CD4-positive, alpha-beta memory T cell (primary cell): ENCODE measurements at regions of chr10 and their contacts with region 1.

Region 1: DNA sequence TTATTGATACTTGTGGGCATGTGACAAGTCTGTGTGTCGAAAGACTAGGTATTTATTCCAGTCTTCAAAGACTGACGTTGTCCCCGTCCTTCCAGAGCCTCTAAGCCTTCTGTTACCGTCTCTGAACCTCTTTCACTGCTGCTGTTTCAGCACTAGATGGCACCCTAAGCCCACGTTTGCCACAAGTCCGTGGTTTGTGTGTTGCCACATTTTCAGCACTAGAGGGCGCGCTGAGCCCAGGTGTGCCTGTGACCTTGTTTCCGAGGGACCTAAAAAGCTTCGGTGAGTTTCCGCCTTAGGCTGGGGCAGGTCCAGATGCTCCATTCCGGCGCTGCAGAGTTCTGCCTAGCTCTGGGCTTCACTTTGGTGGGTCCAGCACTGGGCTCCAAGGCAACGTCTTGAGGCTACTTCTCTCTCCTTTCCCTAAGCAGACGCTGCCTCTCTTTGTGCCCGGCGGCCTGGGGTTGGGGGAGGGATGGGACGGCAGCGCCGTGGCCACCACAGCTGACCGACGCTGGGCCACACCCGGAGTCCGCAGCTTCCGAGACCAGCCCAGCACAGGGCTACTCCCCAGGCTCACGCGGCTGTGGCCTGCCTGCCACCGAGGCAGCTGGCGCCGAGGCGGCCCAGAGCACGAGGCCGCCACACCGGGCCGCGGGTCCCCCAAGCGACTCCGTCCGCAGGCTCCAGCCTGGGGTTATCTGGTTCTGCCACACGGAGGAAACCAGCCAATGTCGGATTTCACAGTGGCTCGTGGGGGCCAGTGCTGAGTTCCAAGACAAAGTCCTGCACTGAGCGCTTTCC is 520.2 kb downstream of the REEP3 start:
- DNase-seq: peak; percentile 78 to 86 (median 84)
- H3K4me3 ChIP-seq: peak overlapping the region in 1 of 2 donors; percentile 36
- H3K4me3 Mint-ChIP-seq: peak overlapping the region; percentile 51 to 84 (median 78)
- H3K27ac ChIP-seq: no peak overlapping the region
- H3K27ac Mint-ChIP-seq: peak overlapping the region in 4 of 7 donors; percentile 25 to 67 (median 40)
- H3K4me1 ChIP-seq: peaks cover 3% of the 10 kb centered on the region
- H3K4me1 Mint-ChIP-seq: peaks cover 6 to 11% (median 6%) of the 10 kb centered on the region in 4 donors
- H3K27me3 ChIP-seq: no peaks in the 10 kb centered on the region
- H3K27me3 Mint-ChIP-seq: peaks cover 2 to 9% of the 10 kb centered on the region in 2 donors

Region 2: DNA sequence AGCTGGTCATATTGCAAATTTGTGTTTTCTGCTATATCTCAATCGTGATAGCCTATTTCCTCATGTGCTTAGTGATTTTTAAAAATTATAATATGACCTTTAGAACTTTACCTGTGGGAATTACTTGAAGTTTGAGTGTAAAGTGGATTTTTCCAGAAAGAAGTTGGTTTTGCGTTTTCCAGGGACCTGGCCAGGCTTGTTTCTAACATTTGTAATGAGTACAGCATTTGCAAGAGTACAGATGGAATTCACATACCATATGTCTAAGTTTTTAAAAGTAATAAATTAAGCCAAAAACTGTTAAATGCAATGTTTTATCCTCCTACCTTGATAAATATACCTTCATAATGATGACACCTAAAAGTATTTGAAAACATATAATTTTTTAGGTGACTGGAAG is 77.0 kb before region 1 on chr10:
- CTCF ChIA-PET with region 1: no interaction called
- POLR2A ChIA-PET with region 1: no interaction called
- intact Hi-C with region 1: no loop called
- DNase-seq: no peak
- H3K4me3 ChIP-seq: no peak overlapping the region
- H3K4me3 Mint-ChIP-seq: no peak overlapping the region
- H3K27ac ChIP-seq: no peak overlapping the region
- H3K27ac Mint-ChIP-seq: no peak overlapping the region
- H3K4me1 ChIP-seq: no peaks in the 10 kb centered on the region
- H3K4me1 Mint-ChIP-seq: no peaks in the 10 kb centered on the region
- H3K27me3 ChIP-seq: no peaks in the 10 kb centered on the region
- H3K27me3 Mint-ChIP-seq: peaks cover 3 to 8% of the 10 kb centered on the region in 2 donors

Region 3: DNA sequence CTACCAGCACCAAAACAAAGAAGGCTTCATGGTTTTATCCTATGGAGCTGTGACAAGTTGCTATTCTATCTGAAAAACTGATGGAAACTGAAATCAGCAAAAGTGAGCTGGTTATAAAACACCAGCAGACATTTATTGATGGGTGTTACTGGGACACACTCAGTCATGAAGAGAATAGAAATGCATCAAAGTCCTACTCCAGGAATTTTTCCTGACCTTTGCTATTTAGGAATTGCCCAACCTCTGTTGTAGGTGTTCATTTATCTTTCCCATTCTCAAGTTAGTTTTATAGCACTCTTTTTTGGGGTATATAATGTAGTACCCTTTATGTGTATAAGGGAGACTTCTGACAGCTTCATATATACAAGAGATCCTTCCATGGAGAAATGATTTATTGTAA is 13.0 kb after region 1 on chr10:
- CTCF ChIA-PET with region 1: interaction called, 20 read pairs
- POLR2A ChIA-PET with region 1: no interaction called
- intact Hi-C with region 1: no loop called
- DNase-seq: no peak
- H3K4me3 ChIP-seq: no peak overlapping the region
- H3K4me3 Mint-ChIP-seq: no peak overlapping the region
- H3K27ac ChIP-seq: no peak overlapping the region
- H3K27ac Mint-ChIP-seq: no peak overlapping the region
- H3K4me1 ChIP-seq: no peaks in the 10 kb centered on the region
- H3K4me1 Mint-ChIP-seq: no peaks in the 10 kb centered on the region
- H3K27me3 ChIP-seq: no peaks in the 10 kb centered on the region
- H3K27me3 Mint-ChIP-seq: peaks cover 0 to 5% of the 10 kb centered on the region in 2 donors